ENCODE measurements at regions of chr11 and their contacts with region 1.

Region 1: GRCh38 chr11:15327786-15328231 is 213.1 kb downstream of the INSC start:
- DNase-seq: peak; percentile 35
- ATAC-seq: peak; percentile 88
- H3K4me3 ChIP-seq: no peak overlapping the region
- H3K27ac ChIP-seq: no peak overlapping the region
- H3K4me1 ChIP-seq: no peaks in the 10 kb centered on the region
- H3K27me3 ChIP-seq: peaks cover 6% of the 10 kb centered on the region; the same call in 1 of the 2 replicates
- CTCF ChIP-seq: peak; percentile 34 to 72 (median 66); a peak in 4 of 6 replicates
- POLR2A ChIP-seq: no peak
- RAD21 ChIP-seq: peak; percentile 68

Region 2: DNA sequence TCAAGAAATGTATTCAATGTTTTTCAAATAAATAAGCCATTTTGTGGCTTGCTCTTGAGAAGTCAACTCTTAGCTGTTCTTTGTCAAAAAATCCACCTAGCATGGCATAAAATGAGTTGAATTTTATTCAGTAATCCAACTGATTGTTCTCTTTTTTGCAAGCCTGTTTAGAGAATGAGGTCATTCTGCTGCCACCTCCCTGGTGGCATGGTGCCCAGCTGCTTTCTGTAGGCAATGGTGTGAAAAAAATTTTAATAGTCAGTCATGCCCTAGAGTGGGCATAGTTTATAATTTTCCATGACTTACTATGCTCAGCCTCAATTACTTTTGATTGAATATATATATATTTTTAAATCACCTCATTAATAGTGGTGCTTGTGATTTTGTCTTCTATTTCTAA is 35.9 kb before region 1 on chr11:
- CTCF ChIA-PET with region 1: no interaction called
- POLR2A ChIA-PET with region 1: no interaction called
- RAD21 ChIA-PET with region 1: no interaction called
- intact Hi-C with region 1: no loop called
- DNase-seq: no peak
- ATAC-seq: no peak
- H3K4me3 ChIP-seq: no peak overlapping the region
- H3K27ac ChIP-seq: no peak overlapping the region
- H3K4me1 ChIP-seq: no peaks in the 10 kb centered on the region
- H3K27me3 ChIP-seq: peaks cover 49% of the 10 kb centered on the region
- CTCF ChIP-seq: no peak
- POLR2A ChIP-seq: no peak
- RAD21 ChIP-seq: no peak

Region 3: GRCh38 chr11:15307619-15308024 is 20.2 kb before region 1 on chr11:
- CTCF ChIA-PET with region 1: no interaction called
- POLR2A ChIA-PET with region 1: no interaction called
- RAD21 ChIA-PET with region 1: no interaction called
- intact Hi-C with region 1: no loop called
- DNase-seq: no peak
- ATAC-seq: no peak
- H3K4me3 ChIP-seq: no peak overlapping the region
- H3K27ac ChIP-seq: no peak overlapping the region
- H3K4me1 ChIP-seq: no peaks in the 10 kb centered on the region
- H3K27me3 ChIP-seq: peaks cover 25% of the 10 kb centered on the region
- CTCF ChIP-seq: no peak
- POLR2A ChIP-seq: no peak
- RAD21 ChIP-seq: no peak

Region 4: DNA sequence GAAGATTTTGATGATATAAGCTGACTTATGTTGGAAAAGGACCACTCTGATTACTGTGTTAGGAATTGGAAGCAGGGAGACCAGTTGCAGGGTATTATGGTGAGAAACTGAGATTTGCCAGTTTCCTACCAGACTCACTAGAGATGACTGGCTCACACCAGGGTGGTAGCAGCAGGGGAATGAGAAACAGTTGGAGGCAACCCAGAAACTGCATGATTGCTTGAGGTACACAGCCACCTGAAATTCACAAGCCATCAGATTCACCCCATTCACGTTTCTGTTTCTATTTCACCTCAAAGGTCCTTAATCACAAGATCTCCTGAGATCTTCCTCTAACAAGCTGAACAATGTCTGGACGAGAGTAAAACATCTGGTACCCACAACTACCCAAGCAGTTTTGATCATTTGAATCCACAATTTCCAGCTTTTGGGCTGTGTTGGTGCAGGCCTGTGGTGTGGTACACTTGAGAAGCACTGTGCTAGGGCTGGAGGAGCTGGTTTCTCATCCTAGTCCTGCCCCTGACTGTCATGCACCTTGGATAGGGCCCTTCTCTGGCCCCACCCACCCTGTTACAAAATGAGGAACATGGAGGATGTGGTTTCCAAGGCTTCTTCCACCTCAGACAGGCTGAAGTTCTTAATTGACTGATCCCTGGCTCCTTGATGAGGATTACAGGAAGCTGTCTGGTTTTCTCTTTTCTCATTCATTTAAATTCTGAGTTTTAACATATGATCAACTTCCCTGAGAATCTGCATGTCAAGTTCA is 20.3 kb after region 1 on chr11:
- CTCF ChIA-PET with region 1: no interaction called
- POLR2A ChIA-PET with region 1: no interaction called
- RAD21 ChIA-PET with region 1: no interaction called
- intact Hi-C with region 1: no loop called
- DNase-seq: no peak
- ATAC-seq: no peak
- H3K4me3 ChIP-seq: no peak overlapping the region
- H3K27ac ChIP-seq: no peak overlapping the region
- H3K4me1 ChIP-seq: no peaks in the 10 kb centered on the region
- H3K27me3 ChIP-seq: peaks cover 5% of the 10 kb centered on the region
- CTCF ChIP-seq: no peak
- POLR2A ChIP-seq: no peak
- RAD21 ChIP-seq: no peak

Region 5: GRCh38 chr11:16605894-16606783 is 1278.3 kb after region 1 on chr11:
- CTCF ChIA-PET with region 1: no interaction called
- POLR2A ChIA-PET with region 1: no interaction called
- RAD21 ChIA-PET with region 1: no interaction called
- intact Hi-C with region 1: loop called (anchors 2 kb)
- DNase-seq: peak; percentile 74
- ATAC-seq: peak; percentile 68
- H3K4me3 ChIP-seq: peak overlapping the region; percentile 48 to 57
- H3K27ac ChIP-seq: no peak overlapping the region
- H3K4me1 ChIP-seq: peaks cover 25 to 37% of the 10 kb centered on the region in 2 experiments
- H3K27me3 ChIP-seq: peaks cover 50% of the 10 kb centered on the region
- CTCF ChIP-seq: peak; percentile 57 to 96 (median 95); a peak in 5 of 6 replicates
- POLR2A ChIP-seq: no peak
- RAD21 ChIP-seq: peak; percentile 64

Measured in HCT116 (cell line).